ENCODE measurements at regions of chr14 and their contacts with region 1.

Region 1: DNA sequence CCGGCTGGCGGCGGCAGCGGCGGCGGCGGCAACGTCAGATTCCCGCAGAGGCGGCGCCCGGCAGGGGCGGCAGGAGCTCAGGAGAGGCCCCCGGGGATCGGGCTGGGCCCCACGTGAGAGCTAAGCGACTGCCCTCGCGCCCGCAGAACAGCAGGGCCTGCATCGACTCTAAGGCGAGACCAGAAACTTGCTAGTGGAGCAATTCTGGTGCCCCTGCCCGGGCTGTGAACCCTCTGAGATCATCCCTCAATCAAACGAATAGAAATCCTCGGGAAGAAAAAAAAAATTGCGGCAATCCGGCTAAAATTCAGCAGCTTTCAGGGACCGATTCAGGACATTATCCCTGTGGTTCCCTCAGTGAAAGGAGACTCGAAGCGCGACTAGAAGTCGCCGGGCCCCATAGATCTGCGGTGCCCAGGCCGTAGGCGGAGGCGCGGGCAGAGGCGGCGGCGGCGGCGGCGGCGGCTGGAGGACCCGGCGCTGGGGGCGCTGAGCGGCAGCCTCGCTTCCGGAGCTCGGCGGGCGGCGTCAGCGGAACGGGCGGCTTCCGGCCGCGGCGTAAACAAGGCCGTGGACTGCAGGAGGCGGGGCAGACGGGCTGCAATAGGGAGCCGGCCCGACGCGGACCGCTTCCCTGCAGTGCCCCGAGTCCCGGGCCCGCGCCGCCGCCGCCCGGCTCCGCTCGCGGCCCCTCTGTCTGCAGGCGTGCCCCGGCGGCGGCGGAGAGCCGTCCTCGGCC is at the start of gene KLHDC2:
- DNase-seq: peak; percentile 93
- H3K4me3 ChIP-seq: peak within 1 kb of the TSS; percentile 73
- H3K27ac ChIP-seq: peak within 1 kb of the TSS; percentile 78
- H3K4me1 ChIP-seq: peaks cover 35% of the 10 kb centered on the region
- CTCF ChIP-seq: peak; percentile 75
- total RNA-seq, gene KLHDC2: 55.7 and 68.0 TPM in 2 replicates

Region 2: GRCh38 chr14:49461529-49462401 is 306.0 kb before region 1 on chr14:
- CTCF ChIA-PET with region 1: interaction called, 4 read pairs
- POLR2A ChIA-PET with region 1: no interaction called
- intact Hi-C with region 1: loop called (anchors 10 kb)
- DNase-seq: peak; percentile 83
- H3K4me3 ChIP-seq: no peak overlapping the region
- H3K27ac ChIP-seq: no peak overlapping the region
- H3K4me1 ChIP-seq: no peaks in the 10 kb centered on the region
- CTCF ChIP-seq: peak; percentile 94

Region 3: DNA sequence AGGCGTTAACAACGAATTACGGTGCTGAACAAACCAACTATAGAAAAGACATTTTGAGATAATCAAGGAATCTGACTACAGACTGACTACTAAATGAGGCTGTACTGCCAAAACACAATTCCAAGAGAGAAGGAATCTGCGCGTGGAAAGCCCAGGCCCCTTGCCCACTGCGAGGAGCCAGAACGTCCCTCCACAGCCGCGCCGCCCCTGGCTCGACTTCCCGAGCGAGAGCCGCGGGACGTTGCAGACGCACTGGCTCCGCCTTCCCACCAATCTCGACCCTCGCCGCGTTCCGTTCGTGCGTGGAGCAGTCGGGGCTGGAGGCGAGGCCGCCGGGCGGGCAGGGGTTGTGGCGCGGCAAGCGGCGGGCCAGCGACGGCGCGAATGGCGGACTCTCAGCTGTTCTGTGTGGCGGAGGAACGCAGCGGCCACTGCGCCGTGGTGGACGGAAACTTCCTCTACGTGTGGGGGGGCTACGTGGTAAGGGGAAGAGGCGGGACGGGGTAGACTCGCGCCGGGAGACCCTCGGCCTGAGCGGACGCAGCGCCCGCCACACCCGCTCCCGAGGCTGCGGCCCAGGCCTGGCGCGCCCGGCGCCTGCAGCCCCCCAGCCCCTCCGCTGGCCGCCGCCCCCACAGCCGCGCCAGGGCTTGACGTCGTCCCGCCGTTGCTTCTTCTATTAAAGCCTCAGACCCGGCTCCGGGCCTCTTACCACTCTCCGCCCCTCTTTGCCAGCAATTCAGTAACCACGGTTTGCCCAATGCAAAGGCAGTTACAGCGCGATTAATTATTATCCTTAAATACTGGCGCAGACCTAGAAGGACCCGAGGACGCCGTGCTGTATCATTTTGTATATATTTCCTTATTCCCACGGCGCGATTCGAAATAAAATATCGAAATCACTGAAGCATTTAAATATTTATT is 74.7 kb before region 1 on chr14 and contains the start of gene KLHDC1:
- CTCF ChIA-PET with region 1: no interaction called
- POLR2A ChIA-PET with region 1: interaction called, 7 read pairs
- intact Hi-C with region 1: loop called (anchors 2 kb)
- DNase-seq: peak; percentile 63
- H3K4me3 ChIP-seq: peak within 1 kb of the TSS; percentile 66
- H3K27ac ChIP-seq: no peak within 1 kb of the TSS
- H3K4me1 ChIP-seq: peaks cover 26% of the 10 kb centered on the region
- CTCF ChIP-seq: no peak
- total RNA-seq, gene KLHDC1: 0.25 and 0.26 TPM in 2 replicates

Region 4: DNA sequence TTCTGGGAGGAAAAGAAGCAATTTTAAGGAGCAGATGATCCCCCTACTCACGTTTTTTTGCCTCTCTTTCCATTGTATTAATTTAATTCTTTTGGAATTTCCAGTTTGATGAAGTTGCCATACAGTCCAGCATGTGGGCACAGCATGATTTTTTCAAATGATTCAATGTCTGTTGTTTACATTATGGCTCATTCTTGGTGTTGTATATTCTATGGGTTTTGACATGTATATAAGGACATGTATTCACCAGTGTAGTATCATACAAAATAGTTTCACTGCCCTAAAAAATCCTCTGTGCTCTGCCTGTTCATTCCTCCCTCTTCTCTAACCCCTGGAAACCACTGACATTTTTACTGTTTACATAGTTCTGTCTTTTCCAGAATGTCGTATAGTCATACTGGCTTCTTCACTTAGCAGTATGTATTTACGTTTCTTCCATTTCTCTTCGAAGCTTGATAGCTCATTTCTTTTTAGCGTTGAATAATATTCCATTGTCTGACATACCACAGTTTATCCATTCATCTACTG is 13.1 kb before region 1 on chr14:
- CTCF ChIA-PET with region 1: no interaction called
- POLR2A ChIA-PET with region 1: no interaction called
- intact Hi-C with region 1: no loop called
- DNase-seq: no peak
- H3K4me3 ChIP-seq: no peak overlapping the region
- H3K27ac ChIP-seq: no peak overlapping the region
- H3K4me1 ChIP-seq: no peaks in the 10 kb centered on the region
- CTCF ChIP-seq: no peak

Region 5: GRCh38 chr14:49852301-49853157 is 84.8 kb after region 1 on chr14 and contains the start of gene NEMF:
- CTCF ChIA-PET with region 1: no interaction called
- POLR2A ChIA-PET with region 1: interaction called, 11 read pairs
- intact Hi-C with region 1: no loop called
- DNase-seq: peak; percentile 93
- H3K4me3 ChIP-seq: peak within 1 kb of the TSS; percentile 93
- H3K27ac ChIP-seq: peak within 1 kb of the TSS; percentile 55
- H3K4me1 ChIP-seq: peaks cover 39% of the 10 kb centered on the region
- CTCF ChIP-seq: peak; percentile 99
- total RNA-seq, gene NEMF: 63.2 and 71.3 TPM in 2 replicates

Region 6: GRCh38 chr14:49892636-49893308 is 125.0 kb after region 1 on chr14 and contains the start of gene ARF6:
- CTCF ChIA-PET with region 1: no interaction called
- POLR2A ChIA-PET with region 1: no interaction called
- intact Hi-C with region 1: no loop called
- DNase-seq: peak; percentile 99
- H3K4me3 ChIP-seq: peak within 1 kb of the TSS; percentile 98
- H3K27ac ChIP-seq: peak within 1 kb of the TSS; percentile 91
- H3K4me1 ChIP-seq: peaks cover 26% of the 10 kb centered on the region
- CTCF ChIP-seq: no peak
- total RNA-seq, gene ARF6: 47.6 and 51.0 TPM in 2 replicates

Region 7: GRCh38 chr14:50116181-50116956 is 348.6 kb after region 1 on chr14 and contains the start of gene VCPKMT:
- CTCF ChIA-PET with region 1: no interaction called
- POLR2A ChIA-PET with region 1: no interaction called
- intact Hi-C with region 1: loop called (anchors 5 kb)
- DNase-seq: peak; percentile 96
- H3K4me3 ChIP-seq: peak within 1 kb of the TSS; percentile 78
- H3K27ac ChIP-seq: peak within 1 kb of the TSS; percentile 65
- H3K4me1 ChIP-seq: peaks cover 36% of the 10 kb centered on the region
- CTCF ChIP-seq: no peak
- total RNA-seq, gene VCPKMT: 13.3 and 13.5 TPM in 2 replicates

Measured in OCI-LY7 (cell line).